ENCODE measurements at regions of chr5 and their contacts with region 1.

Region 1: GRCh38 chr5:174793684-174794328 is 69.4 kb downstream of the MSX2 start:
- DNase-seq: no peak
- H3K4me3 ChIP-seq: no peak overlapping the region
- CTCF ChIP-seq: peak; percentile 94

Region 2: DNA sequence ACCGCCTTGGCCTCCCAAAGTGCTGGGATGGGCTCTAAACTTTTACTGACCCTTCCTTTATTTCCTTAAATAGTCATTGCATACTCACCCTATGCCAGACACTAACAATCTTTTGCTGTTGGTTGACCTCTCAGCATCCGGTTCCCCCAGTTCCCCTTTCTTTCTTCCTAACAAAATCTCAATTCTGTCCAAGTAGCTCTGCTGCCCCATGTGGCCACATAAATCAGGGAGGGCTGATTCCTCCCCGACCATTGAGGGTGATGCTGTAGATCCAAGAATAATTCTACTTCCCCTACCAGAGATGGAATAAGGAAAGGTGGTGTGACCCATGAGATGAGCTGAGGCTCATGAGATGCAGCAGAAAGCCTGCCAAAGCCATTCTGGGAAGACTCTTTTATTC is 384.7 kb before region 1 on chr5:
- CTCF ChIA-PET with region 1: interaction called, 40 read pairs
- POLR2A ChIA-PET with region 1: no interaction called
- DNase-seq: no peak
- H3K4me3 ChIP-seq: no peak overlapping the region
- CTCF ChIP-seq: no peak

Region 3: GRCh38 chr5:174777583-174777982 is 16.2 kb before region 1 on chr5:
- CTCF ChIA-PET with region 1: interaction called, 46 read pairs
- POLR2A ChIA-PET with region 1: no interaction called
- DNase-seq: no peak
- H3K4me3 ChIP-seq: no peak overlapping the region
- CTCF ChIP-seq: no peak